GM12878 (cell line): ENCODE measurements at regions of chr4 and their contacts with region 1.

Region 1: GRCh38 chr4:186149872-186150271 is 41.5 kb upstream of the CYP4V2 start:
- DNase-seq: no peak
- ATAC-seq: peak; percentile 68
- H3K4me3 ChIP-seq: no peak overlapping the region
- H3K27ac ChIP-seq: no peak overlapping the region
- H3K4me1 ChIP-seq: no peaks in the 10 kb centered on the region
- H3K27me3 ChIP-seq: peaks cover 4 to 7% of the 10 kb centered on the region in 2 experiments; a peak in 3 of 4 replicates
- CTCF ChIP-seq: peak; percentile 46 to 85 (median 75)
- EP300 ChIP-seq: no peak
- POLR2A ChIP-seq: no peak
- RAD21 ChIP-seq: peak; percentile 56

Region 2: GRCh38 chr4:186012071-186012470 is 137.8 kb before region 1 on chr4:
- CTCF ChIA-PET with region 1: no interaction called
- POLR2A ChIA-PET with region 1: no interaction called
- RAD21 ChIA-PET with region 1: no interaction called
- SMC1A ChIA-PET with region 1: no interaction called
- in situ Hi-C with region 1: no loop called
- intact Hi-C with region 1: no loop called
- DNase-seq: no peak
- ATAC-seq: no peak
- H3K4me3 ChIP-seq: no peak overlapping the region
- H3K27ac ChIP-seq: no peak overlapping the region
- H3K4me1 ChIP-seq: no peaks in the 10 kb centered on the region
- H3K27me3 ChIP-seq: no peaks in the 10 kb centered on the region; a peak in 1 of 4 replicates
- CTCF ChIP-seq: no peak
- EP300 ChIP-seq: no peak
- POLR2A ChIP-seq: no peak
- RAD21 ChIP-seq: no peak

Region 3: DNA sequence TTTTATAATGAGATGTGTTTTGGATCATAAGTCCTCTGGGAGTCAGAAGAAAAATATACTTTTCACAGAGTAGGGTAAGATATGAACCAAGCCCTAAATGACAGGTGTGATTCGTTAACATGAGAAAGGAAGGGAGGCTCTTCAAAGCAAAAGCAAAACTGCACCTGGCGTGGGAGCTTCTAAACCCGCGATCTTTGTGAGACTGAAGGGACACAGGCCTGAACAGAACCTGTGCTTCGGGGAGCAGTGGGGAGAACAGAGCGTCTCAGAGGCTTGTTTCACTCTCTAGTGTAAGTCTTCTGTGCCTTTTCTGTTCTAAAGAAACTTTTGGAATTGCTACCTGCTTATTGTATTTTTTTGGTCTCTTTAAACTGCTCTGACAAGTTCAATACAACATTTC is 11.3 kb after region 1 on chr4:
- CTCF ChIA-PET with region 1: interaction called, 12 read pairs
- POLR2A ChIA-PET with region 1: no interaction called
- RAD21 ChIA-PET with region 1: no interaction called
- SMC1A ChIA-PET with region 1: no interaction called
- in situ Hi-C with region 1: no loop called
- intact Hi-C with region 1: no loop called
- DNase-seq: peak; percentile 63
- ATAC-seq: peak; percentile 85
- H3K4me3 ChIP-seq: peak overlapping the region; percentile 50; the same call in 1 of the 2 replicates
- H3K27ac ChIP-seq: peak overlapping the region; percentile 50
- H3K4me1 ChIP-seq: peaks cover 6% of the 10 kb centered on the region
- H3K27me3 ChIP-seq: peaks cover 0 to 1% of the 10 kb centered on the region in 2 experiments; a peak in 2 of 4 replicates
- CTCF ChIP-seq: no peak
- EP300 ChIP-seq: no peak
- POLR2A ChIP-seq: peak; percentile 45; the same call in 1 of the 2 replicates
- RAD21 ChIP-seq: no peak